PC-3 (cell line): ENCODE measurements at regions of chr2 and their contacts with region 1.

Region 1: GRCh38 chr2:215949991-215950404 is 63.4 kb downstream of the MREG start:
- DNase-seq: peak; percentile 81
- ATAC-seq: peak; percentile 92
- H3K4me3 ChIP-seq: no peak overlapping the region
- H3K27ac ChIP-seq: no peak overlapping the region
- H3K4me1 ChIP-seq: 0 out of 2 replicates have a peak, but pooled peaks cover 7% of the 10 kb centered on the region
- H3K27me3 ChIP-seq: no peaks in the 10 kb centered on the region
- CTCF ChIP-seq: peak; percentile 87

Region 2: DNA sequence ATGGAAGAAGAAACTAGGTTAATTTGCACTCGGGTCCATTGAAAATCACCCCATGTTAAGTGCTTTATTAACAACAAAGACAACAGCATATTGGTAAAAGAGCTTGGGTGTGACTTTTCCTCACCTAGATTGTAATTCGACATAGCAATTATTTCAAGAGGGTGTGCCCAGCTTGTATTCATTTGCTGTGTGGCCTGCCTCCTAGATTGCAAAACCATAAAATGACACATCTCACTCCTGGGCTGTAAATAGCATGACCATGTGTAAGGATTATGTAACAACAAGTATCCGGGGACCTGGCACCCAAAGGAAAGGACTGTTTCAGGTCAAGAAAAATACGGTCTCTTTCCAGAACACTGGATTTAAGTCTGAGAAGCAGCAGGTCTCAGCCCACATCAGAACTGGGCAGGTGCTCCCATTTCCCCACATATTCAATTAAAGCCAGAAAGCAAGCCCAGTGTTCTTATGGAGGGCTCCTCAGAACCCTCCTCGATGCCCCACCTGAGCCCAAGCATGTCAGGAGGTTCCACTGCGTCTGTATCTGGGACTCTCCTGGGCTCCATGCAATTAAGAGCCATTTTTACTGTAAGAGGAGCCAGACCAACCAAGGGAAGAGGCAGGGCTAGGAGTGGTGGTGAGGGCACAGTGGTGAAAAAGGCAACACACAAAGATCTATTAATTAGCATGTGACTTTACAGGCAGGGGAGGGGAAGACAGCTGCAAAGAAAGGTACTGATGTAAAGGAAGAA is 24.1 kb after region 1 on chr2:
- CTCF ChIA-PET with region 1: no interaction called
- POLR2A ChIA-PET with region 1: no interaction called
- intact Hi-C with region 1: loop called (anchors 2 kb)
- DNase-seq: peak; percentile 64
- ATAC-seq: peak; percentile 87
- H3K4me3 ChIP-seq: no peak overlapping the region
- H3K27ac ChIP-seq: peak overlapping the region; percentile 2; the same call in 1 of the 2 replicates
- H3K4me1 ChIP-seq: peaks cover 13% of the 10 kb centered on the region
- H3K27me3 ChIP-seq: no peaks in the 10 kb centered on the region
- CTCF ChIP-seq: 0 out of 2 replicates have a peak, but pooled peaks have one; percentile 13

Region 3: DNA sequence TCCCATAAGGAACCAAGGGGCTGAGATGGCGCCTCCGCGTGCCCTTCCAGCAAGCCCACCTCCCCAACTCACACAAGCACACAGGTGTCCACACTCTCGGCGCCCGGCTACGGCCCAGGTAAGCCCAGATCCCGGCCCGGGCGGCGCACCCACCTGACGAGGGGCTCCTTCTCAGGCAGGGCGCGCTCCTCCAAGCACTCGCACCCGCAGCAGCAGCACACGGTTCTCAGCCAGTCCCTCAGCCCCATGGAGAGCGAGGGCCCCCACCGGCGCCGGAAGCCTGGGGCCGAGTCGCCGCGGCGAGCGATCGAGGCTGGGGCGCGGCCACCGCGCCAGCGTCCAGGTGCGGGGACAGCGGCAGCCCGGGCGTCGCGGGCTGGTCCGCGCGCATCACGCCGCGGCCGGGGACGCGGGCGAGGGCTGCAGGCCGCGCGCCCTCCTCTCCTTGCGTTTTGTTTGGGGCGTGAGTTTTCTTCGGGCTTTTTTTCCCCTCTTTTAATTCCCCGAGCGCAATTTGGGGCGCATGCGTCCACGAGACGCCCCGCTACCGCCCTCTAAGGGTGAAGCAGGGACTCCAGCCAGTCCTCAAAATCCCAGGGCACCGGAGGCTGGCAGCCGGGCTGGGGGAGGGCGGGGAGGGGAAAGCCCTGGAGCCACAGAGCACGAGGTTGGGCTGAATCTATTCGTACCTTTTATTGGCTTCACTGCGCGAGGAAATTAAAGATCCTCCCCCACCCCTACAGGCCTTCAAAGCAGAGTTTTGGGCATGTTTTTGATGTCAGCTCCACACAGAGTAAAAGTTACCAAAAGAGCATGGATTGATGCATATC is 63.3 kb after region 1 on chr2 and contains the start of gene MREG:
- CTCF ChIA-PET with region 1: interaction called, 7 read pairs
- POLR2A ChIA-PET with region 1: no interaction called
- intact Hi-C with region 1: loop called (anchors 2 kb)
- DNase-seq: peak; percentile 88
- ATAC-seq: peak; percentile 74
- H3K4me3 ChIP-seq: peak within 1 kb of the TSS; percentile 87
- H3K27ac ChIP-seq: peak within 1 kb of the TSS; percentile 89
- H3K4me1 ChIP-seq: peaks cover 28% of the 10 kb centered on the region
- H3K27me3 ChIP-seq: no peaks in the 10 kb centered on the region
- CTCF ChIP-seq: peak; percentile 59
- total RNA-seq, gene MREG: 24.4 and 35.4 TPM in 2 replicates

Region 4: DNA sequence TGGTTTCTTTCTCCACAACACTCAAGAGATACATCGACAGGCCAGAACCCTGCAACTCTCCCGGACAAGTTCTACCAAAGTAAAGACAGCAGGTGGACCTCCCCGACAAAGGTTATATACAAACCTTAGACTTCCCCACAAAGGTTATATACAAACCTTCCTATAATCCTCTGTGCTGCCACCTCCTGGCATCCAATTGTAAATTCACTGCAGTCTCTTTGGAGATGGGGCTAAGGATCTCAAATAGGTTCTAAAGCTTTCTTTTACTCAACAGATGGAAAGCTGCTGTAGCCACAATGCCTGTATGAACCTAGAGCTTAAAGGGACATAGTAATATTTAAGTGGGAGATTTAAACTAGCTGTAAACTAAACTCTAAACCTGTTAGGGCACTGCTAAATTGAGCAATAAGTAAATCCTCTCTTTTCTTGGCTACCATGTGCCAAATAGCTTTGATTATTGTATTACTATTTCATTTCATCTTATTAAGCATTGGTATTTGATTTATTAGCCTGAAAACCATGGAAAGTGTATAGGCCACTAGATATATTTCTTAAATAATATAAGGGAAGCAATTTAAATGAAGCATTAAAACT is 73.2 kb after region 1 on chr2:
- CTCF ChIA-PET with region 1: interaction called, 12 read pairs
- POLR2A ChIA-PET with region 1: interaction called, 6 read pairs
- intact Hi-C with region 1: loop called (anchors 1 kb)
- DNase-seq: peak; percentile 74
- ATAC-seq: peak; percentile 94
- H3K4me3 ChIP-seq: no peak overlapping the region
- H3K27ac ChIP-seq: no peak overlapping the region
- H3K4me1 ChIP-seq: no peaks in the 10 kb centered on the region
- H3K27me3 ChIP-seq: no peaks in the 10 kb centered on the region
- CTCF ChIP-seq: peak; percentile 87